GM10248 (cell line): ENCODE measurements at regions of chr16 and their contacts with region 1.

Region 1: GRCh38 chr16:11526655-11527350 is 59.9 kb downstream of the LITAF start:
- DNase-seq: no peak
- CTCF ChIP-seq: no peak

Region 2: GRCh38 chr16:11515540-11516430 is 11.0 kb before region 1 on chr16:
- CTCF ChIA-PET with region 1: interaction called, 22 read pairs
- POLR2A ChIA-PET with region 1: no interaction called
- DNase-seq: no peak
- CTCF ChIP-seq: no peak

Region 3: DNA sequence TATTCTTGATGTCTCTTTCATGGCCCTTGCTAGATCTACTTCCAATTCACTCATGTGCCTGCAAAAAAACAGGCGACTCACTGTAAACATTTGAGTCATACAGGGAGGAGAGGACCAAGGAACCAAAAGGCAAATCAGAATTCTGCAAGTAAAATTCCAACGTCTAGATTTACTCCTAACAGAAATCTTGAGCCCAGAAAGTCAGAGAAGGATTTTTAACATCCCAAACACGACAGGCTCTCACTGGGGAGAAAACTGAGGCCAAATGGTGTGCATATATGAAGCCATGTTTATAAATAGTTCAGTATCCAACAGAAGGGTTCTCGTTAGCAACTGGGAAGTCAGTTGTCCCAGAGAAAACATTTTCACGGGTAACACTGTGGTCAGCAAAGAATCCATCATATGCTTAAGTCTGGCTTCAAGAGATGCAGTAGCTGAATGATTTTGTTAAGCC is 19.8 kb after region 1 on chr16:
- CTCF ChIA-PET with region 1: interaction called, 26 read pairs
- POLR2A ChIA-PET with region 1: interaction called, 4 read pairs
- DNase-seq: no peak
- CTCF ChIP-seq: no peak

Region 4: GRCh38 chr16:11871193-11871592 is 344.4 kb after region 1 on chr16:
- CTCF ChIA-PET with region 1: no interaction called
- POLR2A ChIA-PET with region 1: no interaction called
- DNase-seq: no peak
- CTCF ChIP-seq: peak; percentile 4

Region 5: DNA sequence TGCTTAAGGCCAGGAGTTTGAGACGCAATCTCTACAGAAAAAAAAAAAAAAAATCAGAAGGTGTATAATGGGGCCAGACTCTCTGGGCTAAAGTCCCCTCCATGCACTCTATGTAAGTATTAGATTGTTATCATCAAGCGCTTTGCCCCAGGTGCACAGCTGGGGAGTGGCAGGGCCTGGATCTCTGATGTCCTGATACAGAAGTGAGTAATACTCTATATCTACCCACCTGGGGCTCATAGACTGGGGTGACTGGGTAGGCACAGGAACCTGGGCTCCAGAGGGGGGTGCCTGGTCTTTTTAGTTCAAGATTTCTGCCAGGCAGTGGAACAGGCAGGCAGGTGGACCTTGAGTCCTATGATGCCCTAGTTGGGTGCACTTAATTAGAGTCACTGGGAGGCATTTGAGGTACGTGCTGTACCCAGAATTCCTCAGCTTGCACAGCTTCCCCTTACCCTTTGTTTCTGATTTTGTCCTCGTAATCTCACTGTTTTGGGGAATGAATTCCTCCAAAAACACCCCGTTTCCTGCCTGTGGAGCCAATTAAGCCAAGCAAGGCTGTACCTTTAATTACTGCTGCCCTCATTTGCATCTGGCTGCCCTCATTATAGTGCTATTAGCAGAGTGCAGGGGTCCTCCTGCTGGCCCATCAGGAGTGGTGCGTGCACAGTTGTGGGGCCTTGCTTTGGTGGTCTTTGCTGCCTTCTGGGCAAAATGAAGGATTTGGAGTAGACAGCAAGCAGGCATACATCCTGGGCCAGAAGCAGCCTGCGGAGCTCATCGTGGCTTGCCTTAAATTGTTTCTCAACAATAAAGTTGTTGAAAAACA is 688.7 kb after region 1 on chr16:
- CTCF ChIA-PET with region 1: no interaction called
- POLR2A ChIA-PET with region 1: no interaction called
- DNase-seq: no peak
- CTCF ChIP-seq: no peak

Region 6: DNA sequence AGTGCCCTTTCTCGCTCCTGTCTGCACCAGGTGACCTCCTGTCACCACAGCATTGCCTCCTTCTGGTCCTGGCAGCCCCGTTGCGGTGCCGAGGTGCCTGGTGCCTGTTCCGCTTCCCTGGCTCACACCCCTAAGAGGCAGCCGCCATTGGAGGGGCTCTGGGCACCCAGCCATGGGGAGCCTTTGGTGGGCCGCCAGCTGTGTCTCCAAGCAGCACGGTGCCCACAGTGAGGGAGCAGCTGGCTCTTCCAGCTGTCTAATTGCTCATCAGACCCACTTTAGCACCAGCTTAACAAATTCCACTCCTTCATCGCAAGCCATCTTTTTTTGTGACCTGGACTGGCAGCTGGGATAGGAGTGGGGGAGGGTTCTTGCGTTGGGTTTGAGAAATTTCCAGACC is 725.8 kb after region 1 on chr16:
- CTCF ChIA-PET with region 1: no interaction called
- POLR2A ChIA-PET with region 1: no interaction called
- DNase-seq: no peak
- CTCF ChIP-seq: no peak